ENCODE measurements at regions of chr1 and their contacts with region 1.

Region 1: GRCh38 chr1:233315718-233316301 is 11.7 kb upstream of the MAP3K21 start:
- DNase-seq: no peak
- H3K4me3 ChIP-seq: no peak overlapping the region
- H3K27ac ChIP-seq: no peak overlapping the region
- H3K4me1 ChIP-seq: no peaks in the 10 kb centered on the region
- H3K27me3 ChIP-seq: peaks cover 0 to 7% (median 0%) of the 10 kb centered on the region in 5 experiments

Region 2: GRCh38 chr1:233304489-233305102 is 11.2 kb before region 1 on chr1:
- CTCF ChIA-PET with region 1: interaction called, 14 read pairs
- POLR2A ChIA-PET with region 1: interaction called, 4 read pairs
- DNase-seq: peak; percentile 41 to 62 (median 58)
- H3K4me3 ChIP-seq: no peak overlapping the region
- H3K27ac ChIP-seq: no peak overlapping the region
- H3K4me1 ChIP-seq: no peaks in the 10 kb centered on the region
- H3K27me3 ChIP-seq: no peaks in the 10 kb centered on the region